Right ventricle myocardium superior (tissue), 1 donor: ENCODE measurements at regions of chr14 and their contacts with region 1.

Region 1: DNA sequence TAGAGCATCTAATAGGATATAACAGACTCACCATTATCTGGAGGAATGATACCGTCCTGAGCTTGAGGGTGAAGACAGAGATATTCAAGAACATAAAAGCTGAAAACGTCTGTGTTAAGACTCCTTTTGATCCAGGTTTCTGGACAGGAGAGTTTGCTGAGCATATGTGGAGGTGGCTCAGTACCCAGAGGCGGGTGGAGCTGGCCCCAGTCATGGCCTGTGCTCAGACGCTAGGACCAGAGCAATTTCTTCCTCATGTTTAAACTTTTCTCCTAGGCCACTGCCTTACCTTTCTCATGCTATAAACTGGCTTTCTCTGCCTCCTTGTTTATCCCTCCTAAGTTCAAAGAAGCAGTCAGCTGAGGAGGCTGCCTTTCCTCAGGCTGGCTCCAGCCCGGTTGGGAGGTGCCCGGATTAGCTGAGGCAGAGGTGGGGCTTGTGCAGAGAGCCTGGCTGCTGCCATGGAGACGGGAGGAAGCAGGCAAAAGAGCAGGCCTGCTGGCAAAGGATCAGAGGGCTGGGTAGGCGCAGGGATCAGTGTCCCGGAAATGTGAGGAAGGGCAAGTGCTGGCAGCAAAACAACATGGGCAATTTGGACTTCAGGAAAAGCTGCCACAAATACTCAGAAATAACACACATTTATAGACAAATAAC is 13.7 kb downstream of the COA8 start:
- DNase-seq: peak; percentile 94
- ATAC-seq: peak; percentile 95

Region 2: DNA sequence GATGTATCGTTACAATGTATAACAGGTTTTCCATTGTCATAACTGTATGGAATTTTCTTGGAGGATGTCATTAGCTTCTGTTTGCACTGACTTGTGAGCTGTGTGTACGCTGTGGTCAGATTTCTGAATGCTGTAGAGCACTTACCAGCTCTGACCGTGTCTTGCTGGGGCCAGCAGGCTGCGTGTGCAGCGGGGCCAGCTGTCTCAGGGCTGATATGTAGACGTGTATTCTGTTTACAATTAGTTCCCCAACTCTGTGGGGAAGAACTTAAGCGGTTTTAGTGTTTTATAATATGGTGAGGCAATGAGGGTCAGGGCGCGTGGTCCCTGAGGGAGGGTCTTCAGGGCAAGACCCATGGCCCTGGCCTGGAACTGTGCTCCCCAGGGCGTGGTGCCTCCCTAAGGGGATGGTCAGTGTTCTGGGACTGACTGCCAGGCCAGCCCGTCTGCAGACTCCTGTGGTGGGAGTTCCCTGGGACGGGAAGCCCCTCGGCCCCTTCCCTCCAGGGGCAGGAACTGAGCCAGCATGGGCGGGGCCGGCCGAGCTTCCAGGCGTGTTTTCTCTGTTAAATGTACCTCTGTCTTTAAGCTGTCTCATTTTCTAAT is 120.1 kb after region 1 on chr14:
- intact Hi-C with region 1: loop called (anchors 10 kb)
- DNase-seq: peak; percentile 74
- ATAC-seq: peak; percentile 44